ENCODE measurements at regions of chr16 and their contacts with region 1.

Region 1: GRCh38 chr16:84754353-84754856 is 54.6 kb downstream of the USP10 start:
- DNase-seq: peak; percentile 74
- CTCF ChIP-seq: peak; percentile 63

Region 2: GRCh38 chr16:84765616-84766580 is 11.5 kb after region 1 on chr16:
- CTCF ChIA-PET with region 1: interaction called, 22 read pairs
- POLR2A ChIA-PET with region 1: no interaction called
- DNase-seq: no peak
- CTCF ChIP-seq: no peak

Region 3: DNA sequence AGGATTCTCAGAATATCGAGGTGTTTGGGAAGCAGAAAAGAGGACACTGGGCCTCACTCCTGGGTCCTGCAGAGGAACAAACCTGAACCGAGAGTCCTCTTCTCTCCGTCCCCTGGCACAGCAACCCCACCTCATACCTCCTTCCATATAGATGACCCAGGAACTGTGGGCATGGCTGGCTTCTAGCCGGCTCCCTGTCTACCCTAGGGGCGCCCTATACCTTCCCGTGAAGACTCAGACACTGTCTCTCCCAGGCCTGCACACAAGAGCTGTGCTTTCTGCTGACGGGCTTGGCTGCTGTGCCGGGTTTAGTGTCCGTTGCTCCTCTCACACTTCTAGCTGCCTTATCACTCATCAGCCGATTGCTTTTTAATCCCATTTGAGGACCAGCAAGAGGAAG is 18.9 kb after region 1 on chr16:
- CTCF ChIA-PET with region 1: interaction called, 20 read pairs
- POLR2A ChIA-PET with region 1: no interaction called
- DNase-seq: no peak
- CTCF ChIP-seq: no peak

Measured in GM10248 (cell line).